ENCODE measurements at regions of chr1 and their contacts with region 1.

Region 1: DNA sequence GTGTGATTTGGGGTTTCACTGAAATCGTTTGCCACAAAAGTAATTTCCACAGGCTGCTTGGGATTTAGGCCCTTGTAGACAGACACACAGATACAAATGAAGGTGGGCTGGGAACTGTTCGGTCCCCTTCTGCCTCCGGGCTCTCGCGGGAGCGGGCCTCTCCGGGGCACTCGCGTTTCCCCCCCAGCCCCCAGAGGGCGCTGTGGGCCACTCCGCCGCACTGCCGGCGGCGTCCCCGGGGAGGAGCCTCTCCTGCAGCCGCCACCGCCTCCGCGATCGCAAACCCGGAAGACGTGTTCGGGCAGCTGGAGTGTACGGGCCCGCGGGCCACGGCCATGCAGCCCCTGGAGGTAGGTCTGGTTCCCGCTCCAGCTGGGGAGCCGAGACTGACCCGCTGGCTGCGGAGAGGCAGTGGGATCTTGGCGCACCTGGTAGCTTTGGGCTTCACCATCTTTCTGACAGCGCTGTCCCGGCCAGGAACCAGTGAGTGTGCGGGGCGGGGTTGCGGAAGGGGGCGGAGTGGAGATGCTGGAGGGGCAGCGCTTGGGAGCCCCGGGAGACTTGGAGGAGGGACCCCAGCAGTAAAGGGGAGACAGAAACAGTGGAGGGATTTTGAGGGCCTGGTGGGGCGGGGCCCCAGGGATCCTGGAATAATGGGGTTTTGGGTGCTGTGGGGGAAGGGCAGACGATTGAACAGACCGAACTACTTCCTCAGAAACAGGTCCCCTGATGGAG is at the start of gene CYB561D1:
- DNase-seq: peak; percentile 95
- ATAC-seq: peak; percentile 97
- H3K4me3 ChIP-seq: peak within 1 kb of the TSS; percentile 97
- H3K27ac ChIP-seq: peak within 1 kb of the TSS; percentile 80
- H3K4me1 ChIP-seq: peaks cover 17% of the 10 kb centered on the region
- H3K27me3 ChIP-seq: no peaks in the 10 kb centered on the region
- CTCF ChIP-seq: peak; percentile 96
- total RNA-seq, gene CYB561D1: 13.1 TPM

Region 2: DNA sequence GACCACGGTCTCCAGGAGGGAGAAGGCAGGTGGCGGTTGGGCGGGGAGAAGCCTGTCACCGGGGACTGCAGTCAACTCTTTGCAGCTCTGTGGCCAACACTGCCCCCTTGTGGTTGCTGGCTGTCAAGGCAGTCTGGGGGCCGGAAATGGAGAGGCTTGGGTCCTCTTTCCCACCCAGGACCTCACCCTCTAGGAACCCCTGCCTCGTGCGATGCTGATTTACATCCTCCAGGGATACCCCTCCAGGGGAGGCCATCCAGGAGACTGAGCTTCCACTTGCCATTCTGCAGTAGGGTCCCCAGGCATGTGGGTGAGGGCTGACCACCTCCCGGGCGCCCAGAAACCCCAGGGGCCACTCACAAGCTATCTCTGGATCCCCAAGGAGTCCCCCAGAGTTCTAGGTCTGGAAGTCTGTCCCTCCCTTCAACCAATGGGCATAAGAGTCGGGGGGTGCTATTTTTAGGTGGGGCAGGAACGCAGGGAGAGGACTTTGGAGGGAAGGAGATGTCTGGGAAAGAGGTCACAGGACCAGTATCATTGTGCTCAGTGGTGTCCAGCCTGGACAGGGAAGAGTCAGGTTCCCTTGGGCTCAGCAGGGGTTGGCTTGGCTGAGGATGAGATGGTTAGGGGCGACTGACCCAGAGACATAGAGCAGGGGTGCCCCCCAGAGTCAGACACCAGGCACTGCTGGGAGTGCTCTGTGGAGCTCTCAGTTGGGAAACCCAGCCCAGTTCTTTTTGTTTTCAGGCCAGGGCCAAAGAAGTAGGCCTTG is 38.6 kb after region 1 on chr1:
- intact Hi-C with region 1: loop called (anchors 5 kb)
- DNase-seq: peak; percentile 86
- ATAC-seq: peak; percentile 92
- H3K4me3 ChIP-seq: no peak overlapping the region
- H3K27ac ChIP-seq: no peak overlapping the region
- H3K4me1 ChIP-seq: peaks cover 10% of the 10 kb centered on the region
- H3K27me3 ChIP-seq: no peaks in the 10 kb centered on the region
- CTCF ChIP-seq: peak; percentile 96